GM10248 (cell line): ENCODE measurements at regions of chr6 and their contacts with region 1.

Region 1: GRCh38 chr6:35522660-35523658 is 10.3 kb upstream of the TULP1 start:
- DNase-seq: peak; percentile 87
- CTCF ChIP-seq: peak; percentile 88

Region 2: DNA sequence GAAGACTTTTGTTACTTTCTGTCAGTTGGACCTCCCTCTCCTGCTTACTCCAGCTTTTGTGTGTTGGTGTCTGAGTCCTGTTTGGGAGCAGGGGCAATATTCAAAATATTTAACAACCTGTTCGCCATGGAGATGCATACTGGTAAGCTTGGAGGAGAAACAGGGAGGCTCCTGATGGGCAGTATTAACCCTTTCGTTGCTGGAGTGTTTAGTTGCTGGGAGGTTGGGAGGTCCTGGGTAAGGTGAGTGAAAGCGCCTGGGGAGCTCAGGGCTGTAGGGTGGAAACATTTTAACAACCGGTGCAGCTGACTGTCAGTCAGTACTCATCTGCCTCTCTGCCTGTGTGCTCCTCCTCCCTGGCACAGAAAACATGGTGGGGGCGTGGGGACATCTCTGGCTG is 14.4 kb before region 1 on chr6:
- CTCF ChIA-PET with region 1: interaction called, 13 read pairs
- POLR2A ChIA-PET with region 1: no interaction called
- DNase-seq: no peak
- CTCF ChIP-seq: no peak

Region 3: GRCh38 chr6:35534407-35535170 is 11.6 kb after region 1 on chr6:
- CTCF ChIA-PET with region 1: interaction called, 49 read pairs
- POLR2A ChIA-PET with region 1: no interaction called
- DNase-seq: no peak
- CTCF ChIP-seq: no peak

Region 4: DNA sequence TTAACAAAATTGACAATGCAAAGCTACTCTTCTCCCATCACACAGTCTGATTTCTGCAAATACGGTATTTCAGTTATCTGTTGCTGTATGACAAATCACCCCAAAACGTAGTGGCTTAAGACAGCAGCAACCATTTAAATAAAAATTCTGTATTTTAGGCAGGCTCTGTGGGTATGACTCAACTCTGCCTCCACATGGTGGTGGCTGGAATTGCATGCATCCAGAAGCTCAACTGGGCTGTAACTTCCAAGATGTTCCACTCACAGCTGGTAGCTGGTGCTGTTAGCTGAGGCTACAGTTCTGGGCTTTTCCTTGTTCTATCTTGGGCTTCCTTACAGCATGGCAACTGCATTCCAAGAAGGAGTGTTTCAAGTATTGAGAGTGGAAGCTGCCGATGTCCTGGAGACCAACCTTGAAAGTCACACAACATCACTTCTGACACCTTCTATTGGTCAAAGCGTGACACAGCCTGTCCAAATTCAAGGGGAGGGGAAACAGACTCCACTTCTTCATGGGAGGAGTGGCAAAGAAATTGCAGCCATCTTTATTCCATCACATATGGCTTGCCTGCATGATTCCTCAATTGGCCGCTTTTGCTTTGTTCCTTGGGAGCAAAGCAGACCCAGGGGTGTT is 29.4 kb after region 1 on chr6:
- CTCF ChIA-PET with region 1: interaction called, 10 read pairs
- POLR2A ChIA-PET with region 1: no interaction called
- DNase-seq: peak; percentile 35
- CTCF ChIP-seq: peak; percentile 62

Region 5: DNA sequence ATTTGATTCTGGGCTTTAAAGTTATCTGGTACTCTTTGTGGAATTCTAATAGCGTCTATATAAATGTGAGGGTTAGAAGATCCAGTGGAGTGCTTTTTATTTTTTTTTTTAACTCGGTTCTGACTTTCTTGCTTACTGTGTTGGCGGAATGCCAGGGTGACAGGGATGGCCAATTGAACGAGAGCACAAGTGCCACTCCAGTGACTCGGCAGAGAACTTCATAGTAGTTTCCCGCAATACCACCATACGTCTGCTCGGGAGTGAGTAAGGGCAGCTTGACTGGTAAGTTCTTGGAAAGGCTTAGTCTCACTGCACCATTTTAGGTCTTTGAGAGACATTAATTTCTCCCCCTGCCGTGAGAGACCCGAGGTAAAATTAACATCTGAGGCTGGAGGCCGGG is 39.1 kb after region 1 on chr6:
- CTCF ChIA-PET with region 1: interaction called, 10 read pairs
- POLR2A ChIA-PET with region 1: no interaction called
- DNase-seq: no peak
- CTCF ChIP-seq: no peak

Region 6: GRCh38 chr6:35920793-35921732 is 398.1 kb after region 1 on chr6 and contains the start of gene SRPK1:
- CTCF ChIA-PET with region 1: no interaction called
- POLR2A ChIA-PET with region 1: no interaction called
- DNase-seq: peak; percentile 97
- CTCF ChIP-seq: no peak